HEK293 (cell line): ENCODE measurements at regions of chr11 and their contacts with region 1.

Region 1: GRCh38 chr11:65888163-65888814 is at the start of gene FIBP:
- H3K4me3 ChIP-seq: peak within 1 kb of the TSS; percentile 87
- H3K27ac ChIP-seq: peak within 1 kb of the TSS; percentile 56; the same call in 1 of the 2 replicates
- H3K4me1 ChIP-seq: no peaks in the 10 kb centered on the region
- CTCF ChIP-seq: peak; percentile 96

Region 2: GRCh38 chr11:65711785-65712632 is 176.3 kb before region 1 on chr11 and contains the start of gene KAT5:
- CTCF ChIA-PET with region 1: interaction called, 19 read pairs
- POLR2A ChIA-PET with region 1: interaction called, 14 read pairs
- H3K4me3 ChIP-seq: peak within 1 kb of the TSS; percentile 55
- H3K27ac ChIP-seq: peak within 1 kb of the TSS; percentile 60
- H3K4me1 ChIP-seq: no peaks in the 10 kb centered on the region
- CTCF ChIP-seq: peak; percentile 91

Region 3: GRCh38 chr11:65859200-65859811 is 29.0 kb before region 1 on chr11:
- CTCF ChIA-PET with region 1: interaction called, 118 read pairs
- POLR2A ChIA-PET with region 1: interaction called, 121 read pairs
- H3K4me3 ChIP-seq: peak overlapping the region; percentile 94
- H3K27ac ChIP-seq: peak overlapping the region; percentile 92
- H3K4me1 ChIP-seq: peaks cover 4% of the 10 kb centered on the region; the same call in 1 of the 2 replicates
- CTCF ChIP-seq: peak; percentile 69; the same call in 1 of the 2 replicates

Region 4: DNA sequence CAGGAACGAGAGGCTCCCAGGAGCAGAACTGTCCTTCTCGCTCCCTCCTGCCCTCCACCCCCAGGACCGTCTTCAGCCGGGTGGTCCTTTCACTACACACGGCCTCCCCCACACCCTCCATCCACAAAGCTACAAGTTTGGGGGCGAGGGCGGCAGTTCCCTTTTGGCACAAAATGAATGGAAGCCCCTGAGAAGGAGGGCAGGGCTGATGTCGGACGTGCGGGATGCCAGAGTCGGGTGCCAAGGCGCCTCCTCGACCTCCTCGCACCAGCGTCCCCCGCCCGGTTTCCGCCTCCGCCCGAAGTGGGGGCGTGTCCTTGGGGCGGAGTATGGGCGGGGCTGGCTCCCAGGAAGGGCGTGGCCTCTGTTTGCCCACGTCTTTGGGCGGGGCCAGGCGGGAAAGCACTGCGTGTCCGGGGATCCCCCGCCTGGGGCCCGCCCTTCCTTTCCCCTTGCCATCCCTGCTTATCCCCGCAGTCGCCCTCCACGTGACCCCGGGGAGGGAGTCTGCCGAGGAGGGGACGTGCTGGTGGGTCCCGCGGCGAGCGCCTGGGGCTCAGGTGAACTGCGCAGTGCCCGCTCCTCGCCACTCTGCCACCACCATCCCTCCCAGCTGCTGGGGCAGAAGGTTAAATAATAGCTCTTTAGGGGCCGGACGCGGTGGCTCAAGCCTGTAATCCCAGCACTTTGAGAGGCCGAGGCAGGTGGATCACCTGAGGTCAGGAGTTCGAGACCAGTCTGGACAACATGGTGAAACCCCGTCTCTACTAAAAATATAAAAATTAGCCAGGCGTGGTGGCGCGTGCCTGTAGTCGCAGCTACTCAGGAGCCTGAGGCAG is 14.8 kb before region 1 on chr11:
- CTCF ChIA-PET with region 1: interaction called, 35 read pairs
- POLR2A ChIA-PET with region 1: interaction called, 13 read pairs
- H3K4me3 ChIP-seq: peak overlapping the region; percentile 44
- H3K27ac ChIP-seq: no peak overlapping the region
- H3K4me1 ChIP-seq: no peaks in the 10 kb centered on the region
- CTCF ChIP-seq: no peak

Region 5: DNA sequence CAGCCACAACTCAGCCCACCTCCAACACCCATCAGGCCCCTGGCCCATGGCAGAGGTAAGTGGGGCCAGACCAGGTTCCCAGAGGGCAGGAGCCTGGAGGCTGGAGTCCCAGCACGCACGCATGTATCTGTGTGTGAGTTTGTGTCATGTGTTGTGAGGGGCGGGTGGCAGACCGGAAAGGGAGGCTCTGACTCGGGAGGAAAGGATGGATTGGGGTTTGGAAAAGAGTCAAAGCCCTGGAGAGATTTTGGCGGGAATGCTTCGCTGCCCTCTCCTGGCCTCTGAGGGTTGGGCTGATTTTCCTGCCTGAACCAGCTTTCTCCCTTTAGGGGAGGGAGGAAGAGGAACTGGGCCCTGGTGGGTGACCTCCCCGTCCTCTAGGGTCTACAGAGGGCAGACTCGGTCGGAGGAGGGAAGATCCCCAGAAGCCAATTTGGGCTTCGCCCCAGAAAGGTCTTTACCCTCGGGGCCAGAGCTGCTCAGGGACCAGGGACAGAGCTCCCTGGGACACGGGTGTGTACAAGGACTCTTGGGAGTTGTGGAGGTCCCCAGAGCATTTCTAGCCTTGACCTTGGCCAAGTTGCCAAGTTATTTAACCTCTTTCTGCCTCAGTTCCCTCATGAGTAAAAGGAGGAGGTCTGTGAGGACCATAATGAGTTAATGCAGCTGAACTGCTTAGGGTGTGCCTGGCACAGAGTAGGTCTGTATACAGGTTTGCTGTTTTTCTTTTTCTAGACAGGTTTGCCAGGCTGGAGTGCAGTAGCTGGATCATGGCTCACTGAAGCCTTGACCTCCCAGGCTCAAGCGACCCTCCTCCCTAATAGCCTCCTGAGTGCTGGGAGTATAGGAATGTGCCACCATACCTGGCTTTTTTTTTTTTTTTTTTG is 23.6 kb after region 1 on chr11:
- CTCF ChIA-PET with region 1: interaction called, 189 read pairs
- POLR2A ChIA-PET with region 1: interaction called, 19 read pairs
- H3K4me3 ChIP-seq: no peak overlapping the region
- H3K27ac ChIP-seq: no peak overlapping the region
- H3K4me1 ChIP-seq: no peaks in the 10 kb centered on the region; the same call in 1 of the 2 replicates
- CTCF ChIP-seq: no peak; the same call in 1 of the 2 replicates

Region 6: GRCh38 chr11:65934014-65934413 is 45.7 kb after region 1 on chr11:
- CTCF ChIA-PET with region 1: interaction called, 15 read pairs
- POLR2A ChIA-PET with region 1: interaction called, 4 read pairs
- H3K4me3 ChIP-seq: no peak overlapping the region
- H3K27ac ChIP-seq: no peak overlapping the region
- H3K4me1 ChIP-seq: no peaks in the 10 kb centered on the region
- CTCF ChIP-seq: no peak

Region 7: GRCh38 chr11:65988791-65989592 is 100.7 kb after region 1 on chr11:
- CTCF ChIA-PET with region 1: interaction called, 59 read pairs
- POLR2A ChIA-PET with region 1: interaction called, 5 read pairs
- H3K4me3 ChIP-seq: no peak overlapping the region
- H3K27ac ChIP-seq: no peak overlapping the region
- H3K4me1 ChIP-seq: no peaks in the 10 kb centered on the region
- CTCF ChIP-seq: peak; percentile 94

Region 8: GRCh38 chr11:66142370-66143263 is 254.3 kb after region 1 on chr11:
- CTCF ChIA-PET with region 1: no interaction called
- POLR2A ChIA-PET with region 1: no interaction called
- H3K4me3 ChIP-seq: no peak overlapping the region
- H3K27ac ChIP-seq: no peak overlapping the region
- H3K4me1 ChIP-seq: 0 out of 2 replicates have a peak, but pooled peaks cover 6% of the 10 kb centered on the region
- CTCF ChIP-seq: no peak